GM18951 (cell line): ENCODE measurements at regions of chr6 and their contacts with region 1.

Region 1: DNA sequence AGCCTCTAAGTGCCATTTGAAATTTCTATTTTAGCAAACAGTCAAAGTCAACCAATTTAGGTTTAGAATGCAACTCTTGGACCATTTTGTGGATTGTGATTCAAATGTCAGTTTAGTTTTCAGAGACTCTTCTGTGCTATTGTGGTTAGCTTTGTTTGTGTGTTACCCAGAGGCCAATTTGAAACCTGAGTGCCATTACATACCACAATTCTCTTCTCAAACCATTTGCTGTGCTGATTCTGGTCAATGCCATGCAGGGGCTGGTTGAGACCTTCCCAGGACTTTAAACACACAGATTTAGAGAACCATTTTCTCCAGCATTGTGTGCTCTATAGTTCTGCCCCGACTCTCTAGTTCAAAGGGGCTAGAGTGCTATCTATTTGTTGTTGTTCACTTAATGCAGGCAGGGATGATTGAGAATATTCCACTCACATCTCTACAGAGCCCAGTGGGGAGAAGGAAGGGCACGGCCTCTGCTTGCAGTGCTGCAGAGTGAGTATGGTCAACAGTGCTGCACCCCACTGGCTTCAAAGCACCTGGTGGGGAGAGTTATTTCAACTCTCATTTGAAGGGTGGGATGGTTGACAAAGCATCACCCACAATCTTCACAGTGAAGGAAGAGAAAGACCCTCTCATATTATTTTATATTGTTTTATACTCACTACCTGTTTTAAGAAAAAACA is 738.2 kb downstream of the COL12A1 start:
- POLR2A ChIP-seq: no peak

Region 2: DNA sequence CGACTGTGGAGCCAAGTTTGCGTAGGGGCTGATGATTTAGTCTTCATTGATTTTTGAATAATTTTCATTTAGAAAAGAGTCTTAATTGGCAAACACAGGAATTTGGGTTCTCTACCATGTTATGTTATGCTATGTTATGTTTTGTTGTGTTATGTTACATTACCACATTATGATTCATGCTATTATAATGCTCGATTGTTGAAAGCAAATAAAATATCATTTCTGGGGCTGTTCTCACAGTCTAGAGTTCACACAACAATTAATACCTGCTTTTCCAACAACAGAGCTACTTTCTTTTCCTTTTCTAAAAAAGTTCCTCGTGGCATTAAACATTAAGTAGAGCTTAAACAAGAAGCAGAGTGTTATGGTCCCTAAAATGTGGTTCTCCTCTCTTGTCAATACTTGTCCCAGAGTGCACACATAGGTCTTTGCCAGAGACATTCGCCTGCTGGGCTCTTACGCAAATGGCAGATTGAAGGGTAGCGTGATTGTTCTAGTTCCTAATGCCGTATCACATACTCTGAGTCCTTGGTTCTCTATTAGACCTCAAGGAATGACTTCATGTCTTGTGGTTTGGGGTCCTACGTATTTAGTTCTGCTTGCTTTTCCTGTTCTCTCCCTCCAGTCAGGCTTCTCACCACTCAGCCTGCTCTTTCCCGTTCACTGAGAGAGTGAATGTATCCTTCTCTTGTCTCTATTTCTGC is 401.4 kb before region 1 on chr6:
- in situ Hi-C with region 1: no loop called
- POLR2A ChIP-seq: no peak

Region 3: DNA sequence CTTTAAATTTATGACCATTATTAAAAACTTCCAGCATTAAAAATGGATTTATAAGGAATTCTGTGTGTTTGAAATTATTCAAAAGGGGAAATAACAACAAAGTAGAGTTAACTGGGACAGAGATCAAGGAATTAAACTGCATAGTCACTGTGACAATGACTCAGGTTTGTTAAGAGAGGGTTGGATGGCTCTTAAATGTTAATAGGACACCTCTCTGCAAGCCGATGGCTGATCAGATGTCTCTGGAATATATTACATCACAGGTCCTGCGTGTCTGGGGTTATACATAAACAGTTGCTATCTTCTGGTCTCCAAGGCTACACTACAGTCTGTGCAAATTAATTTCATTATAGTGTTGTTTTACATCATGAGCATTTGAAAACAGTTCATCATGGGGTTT is 163.9 kb after region 1 on chr6:
- in situ Hi-C with region 1: loop called (anchors 10 kb)
- POLR2A ChIP-seq: no peak